GM12878 (cell line): ENCODE measurements at regions of chr12 and their contacts with region 1.

Region 1: DNA sequence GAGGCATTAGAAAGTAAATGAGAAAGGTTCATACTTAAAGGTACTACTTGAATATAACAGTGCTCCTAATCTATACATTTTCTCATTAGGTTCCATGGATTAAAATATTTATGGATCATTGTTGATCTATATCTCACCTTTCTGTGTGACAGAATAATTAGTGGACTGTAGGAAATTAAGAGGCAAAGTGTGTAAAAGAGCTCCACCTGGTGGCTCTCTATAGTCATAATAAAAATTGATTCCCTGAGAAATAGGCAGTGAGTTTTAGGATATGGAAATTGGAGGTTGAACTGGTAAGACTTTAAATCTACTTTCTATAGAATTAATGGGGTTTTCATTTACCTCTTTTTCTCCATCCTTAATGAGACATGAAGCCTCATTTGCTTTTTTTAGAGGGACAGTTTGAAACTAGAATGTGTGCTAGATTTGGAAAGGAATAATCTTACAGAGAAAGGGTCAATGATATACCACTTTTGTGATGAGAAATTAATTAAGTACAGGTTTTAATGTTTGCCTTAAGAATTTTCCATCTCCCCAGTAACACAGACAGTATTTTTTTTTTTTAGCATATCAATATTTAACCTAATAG is 11.8 kb upstream of the DERA start:
- DNase-seq: no peak
- ATAC-seq: peak; percentile 76
- H3K4me3 ChIP-seq: no peak overlapping the region
- H3K27ac ChIP-seq: no peak overlapping the region
- H3K4me1 ChIP-seq: no peaks in the 10 kb centered on the region
- H3K27me3 ChIP-seq: no peaks in the 10 kb centered on the region
- CTCF ChIP-seq: peak; percentile 43 to 64 (median 57)
- EP300 ChIP-seq: no peak
- POLR2A ChIP-seq: no peak
- RAD21 ChIP-seq: peak; percentile 66

Region 2: DNA sequence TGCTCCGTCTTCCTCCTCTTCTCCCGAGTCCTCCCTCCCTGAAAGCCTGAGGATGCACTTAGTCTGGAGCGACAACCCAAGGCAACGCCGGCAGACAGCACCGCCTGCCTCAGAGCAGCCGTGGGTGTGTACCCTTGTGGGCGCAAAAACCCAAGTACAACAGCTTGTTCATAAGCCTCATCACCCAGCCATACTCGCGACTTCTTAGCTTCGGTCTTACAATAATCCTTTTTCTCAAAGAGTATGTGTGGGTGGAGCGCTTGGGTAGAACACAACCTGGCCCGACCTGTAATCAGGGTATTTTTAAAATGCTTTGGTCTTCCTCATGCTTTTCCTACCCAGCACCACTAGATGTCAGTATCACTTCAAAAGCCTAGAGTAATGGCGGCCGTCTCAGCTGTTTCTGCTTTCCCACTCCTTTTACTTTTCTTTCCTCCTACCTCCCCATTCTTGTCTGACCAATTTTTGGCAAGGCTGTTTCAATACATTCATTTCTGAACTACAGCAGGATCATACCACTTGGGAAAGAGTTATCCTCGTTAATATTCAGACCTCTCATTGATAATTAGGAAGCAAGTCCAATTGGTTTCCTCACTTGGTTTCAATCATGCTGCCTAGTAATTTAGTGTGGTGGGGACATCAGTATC is 309.1 kb before region 1 on chr12:
- CTCF ChIA-PET with region 1: interaction called, 35 read pairs
- POLR2A ChIA-PET with region 1: no interaction called
- RAD21 ChIA-PET with region 1: interaction called, 6 read pairs
- SMC1A ChIA-PET with region 1: interaction called, 13 read pairs
- in situ Hi-C with region 1: no loop called
- intact Hi-C with region 1: loop called (anchors 1 kb)
- DNase-seq: peak; percentile 46
- ATAC-seq: peak; percentile 97
- H3K4me3 ChIP-seq: peak overlapping the region; percentile 46; the same call in 1 of the 2 replicates
- H3K27ac ChIP-seq: no peak overlapping the region
- H3K4me1 ChIP-seq: peaks cover 4% of the 10 kb centered on the region; the same call in 1 of the 2 replicates
- H3K27me3 ChIP-seq: 0 out of 4 replicates have a peak, but pooled peaks cover 0 to 1% of the 10 kb centered on the region in 2 experiments
- CTCF ChIP-seq: peak; percentile 85 to 94 (median 86); a peak in 5 of 6 replicates
- EP300 ChIP-seq: no peak
- POLR2A ChIP-seq: no peak
- RAD21 ChIP-seq: peak; percentile 97

Region 3: GRCh38 chr12:15863984-15864383 is 35.4 kb before region 1 on chr12:
- CTCF ChIA-PET with region 1: interaction called, 74 read pairs
- POLR2A ChIA-PET with region 1: interaction called, 4 read pairs
- RAD21 ChIA-PET with region 1: interaction called, 42 read pairs
- SMC1A ChIA-PET with region 1: interaction called, 56 read pairs
- in situ Hi-C with region 1: no loop called
- intact Hi-C with region 1: loop called (anchors 2 kb)
- DNase-seq: peak; percentile 67
- ATAC-seq: peak; percentile 94
- H3K4me3 ChIP-seq: no peak overlapping the region
- H3K27ac ChIP-seq: no peak overlapping the region
- H3K4me1 ChIP-seq: no peaks in the 10 kb centered on the region
- H3K27me3 ChIP-seq: no peaks in the 10 kb centered on the region
- CTCF ChIP-seq: no peak
- EP300 ChIP-seq: no peak
- POLR2A ChIP-seq: no peak
- RAD21 ChIP-seq: no peak

Region 4: GRCh38 chr12:15882118-15882971 is 17.0 kb before region 1 on chr12 and contains the start of gene STRAP:
- CTCF ChIA-PET with region 1: interaction called, 57 read pairs
- POLR2A ChIA-PET with region 1: interaction called, 6 read pairs
- RAD21 ChIA-PET with region 1: interaction called, 5 read pairs
- SMC1A ChIA-PET with region 1: interaction called, 30 read pairs
- in situ Hi-C with region 1: no loop called
- intact Hi-C with region 1: no loop called
- DNase-seq: peak; percentile 88
- ATAC-seq: peak; percentile 93
- H3K4me3 ChIP-seq: peak within 1 kb of the TSS; percentile 97
- H3K27ac ChIP-seq: peak within 1 kb of the TSS; percentile 90
- H3K4me1 ChIP-seq: peaks cover 4% of the 10 kb centered on the region; the same call in 1 of the 2 replicates
- H3K27me3 ChIP-seq: no peaks in the 10 kb centered on the region
- CTCF ChIP-seq: no peak
- EP300 ChIP-seq: no peak
- POLR2A ChIP-seq: peak; percentile 94
- RAD21 ChIP-seq: no peak
- polyA plus RNA-seq, gene STRAP: 102 to 227 TPM

Region 5: GRCh38 chr12:16350682-16351081 is 451.3 kb after region 1 on chr12:
- CTCF ChIA-PET with region 1: no interaction called
- POLR2A ChIA-PET with region 1: no interaction called
- RAD21 ChIA-PET with region 1: no interaction called
- SMC1A ChIA-PET with region 1: no interaction called
- in situ Hi-C with region 1: no loop called
- intact Hi-C with region 1: no loop called
- DNase-seq: no peak
- ATAC-seq: no peak
- H3K4me3 ChIP-seq: no peak overlapping the region
- H3K27ac ChIP-seq: no peak overlapping the region
- H3K4me1 ChIP-seq: no peaks in the 10 kb centered on the region
- H3K27me3 ChIP-seq: no peaks in the 10 kb centered on the region
- CTCF ChIP-seq: no peak
- EP300 ChIP-seq: no peak
- POLR2A ChIP-seq: no peak
- RAD21 ChIP-seq: no peak